K562 (cell line): ENCODE measurements at regions of chr1 and their contacts with region 1.

Region 1: DNA sequence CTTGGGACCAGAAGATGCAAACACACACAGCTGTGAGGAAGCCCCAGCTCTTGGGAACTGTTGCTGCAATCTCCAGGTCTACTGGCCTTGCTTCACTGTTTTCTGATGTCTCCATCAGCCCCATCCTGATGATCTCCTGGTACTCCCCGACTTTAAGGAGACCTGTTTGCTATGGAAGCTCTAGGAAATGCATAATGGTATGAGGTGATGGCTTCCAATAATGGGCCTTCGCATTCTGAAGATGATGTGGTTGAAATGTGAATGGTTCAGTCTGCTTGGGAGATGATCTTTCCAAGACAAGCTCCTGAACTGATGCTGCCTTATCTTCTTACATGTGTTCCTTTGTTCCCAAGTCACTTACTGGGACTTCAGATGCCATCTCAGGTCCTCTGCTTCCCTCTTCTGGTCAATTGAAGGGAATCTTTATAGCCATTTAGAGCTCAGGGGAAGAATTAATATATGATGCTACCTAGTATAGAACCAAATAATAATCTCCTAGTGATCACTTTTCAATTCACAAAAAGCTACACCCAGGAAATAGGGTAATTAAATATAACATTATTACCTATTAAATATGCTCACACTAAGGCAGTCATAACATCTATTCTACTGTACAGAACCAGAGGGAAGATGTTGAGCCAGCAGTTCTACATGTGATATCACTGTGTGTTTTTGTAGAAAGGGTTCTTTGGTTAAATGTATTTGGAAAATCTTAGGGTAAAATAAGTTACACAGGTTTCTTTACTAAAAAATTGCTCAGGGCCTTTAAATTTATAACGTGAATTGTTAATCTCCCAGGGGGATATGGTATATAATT is 73.9 kb upstream of the VTCN1 start:
- DNase-seq: peak; percentile 53 to 70 (median 60)
- ATAC-seq: peak; percentile 90
- H3K4me3 ChIP-seq: no peak overlapping the region
- H3K27ac ChIP-seq: no peak overlapping the region
- H3K4me1 ChIP-seq: no peaks in the 10 kb centered on the region
- H3K27me3 ChIP-seq: no peaks in the 10 kb centered on the region; a peak in 1 of 5 replicates
- CTCF ChIP-seq: peak; percentile 65 to 88 (median 71); a peak in 5 of 6 replicates
- EP300 ChIP-seq: no peak
- POLR2A ChIP-seq: no peak
- RAD21 ChIP-seq: peak; percentile 91 to 95

Region 2: DNA sequence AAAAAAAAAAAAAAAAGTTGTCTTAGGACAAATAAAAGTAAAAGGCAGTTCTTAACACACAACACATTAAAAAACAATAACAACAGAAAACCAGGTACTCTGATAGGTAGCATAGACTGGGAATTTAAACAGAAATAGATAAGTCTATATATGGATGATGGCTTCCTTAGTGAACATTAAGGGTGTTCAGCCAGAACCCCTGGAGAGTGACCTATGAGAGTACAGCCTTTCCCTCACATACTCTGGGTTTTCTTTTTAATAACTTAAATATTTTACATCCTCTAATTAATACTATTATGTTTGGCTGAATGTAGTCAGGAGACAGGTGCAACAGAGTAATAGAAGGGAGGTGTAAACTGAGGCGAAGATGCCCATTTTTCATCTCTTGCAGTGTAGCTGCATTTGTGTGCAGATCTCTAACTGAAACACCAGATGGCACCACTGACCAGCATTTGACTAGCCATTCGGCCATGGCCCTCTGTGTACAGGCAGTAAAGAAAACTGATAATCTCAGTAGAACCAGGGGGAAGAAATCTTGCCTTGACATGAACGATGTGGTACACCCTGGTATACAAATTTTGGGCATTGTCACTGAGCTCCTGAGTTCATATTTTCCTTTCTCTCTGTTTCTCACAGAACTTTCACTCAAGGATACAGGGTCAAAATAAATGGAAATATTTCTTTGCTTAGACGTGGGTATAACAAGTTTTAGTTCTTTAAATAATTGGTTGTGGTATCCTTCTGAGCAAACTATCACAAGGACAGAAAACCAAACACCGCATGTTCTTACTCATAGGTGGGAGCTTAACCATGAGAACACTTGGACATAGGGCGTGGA is 216.9 kb before region 1 on chr1:
- CTCF ChIA-PET with region 1: interaction called, 30 read pairs
- POLR2A ChIA-PET with region 1: interaction called, 9 read pairs
- in situ Hi-C with region 1: no loop called
- intact Hi-C with region 1: loop called (anchors 1 kb)
- DNase-seq: peak; percentile 47 to 76 (median 61)
- ATAC-seq: peak; percentile 96
- H3K4me3 ChIP-seq: no peak overlapping the region
- H3K27ac ChIP-seq: no peak overlapping the region
- H3K4me1 ChIP-seq: no peaks in the 10 kb centered on the region; a peak in 1 of 5 replicates
- H3K27me3 ChIP-seq: no peaks in the 10 kb centered on the region
- CTCF ChIP-seq: peak; percentile 79 to 90 (median 88)
- EP300 ChIP-seq: no peak
- POLR2A ChIP-seq: no peak
- RAD21 ChIP-seq: peak; percentile 95

Region 3: DNA sequence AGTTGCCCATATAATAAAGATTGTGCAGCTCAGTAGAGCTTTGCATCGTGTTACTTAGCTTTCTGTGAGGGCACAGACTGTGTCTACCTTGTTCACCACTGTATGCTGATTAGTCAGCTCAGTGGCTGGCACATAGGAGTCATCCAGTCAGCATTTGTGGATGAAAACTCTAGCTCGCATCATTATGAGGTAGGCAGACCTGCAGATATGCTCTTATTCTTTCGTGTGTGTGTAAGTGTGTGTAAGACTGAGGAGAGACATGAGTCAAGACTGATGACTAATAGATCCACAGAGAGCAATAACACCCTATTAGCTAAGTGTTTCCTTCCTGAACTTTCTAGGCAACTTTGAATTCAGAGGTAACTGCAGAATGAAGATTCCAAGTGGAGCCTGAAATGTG is 207.3 kb before region 1 on chr1:
- CTCF ChIA-PET with region 1: no interaction called
- POLR2A ChIA-PET with region 1: no interaction called
- in situ Hi-C with region 1: loop called (anchors 5 kb)
- intact Hi-C with region 1: no loop called
- DNase-seq: no peak
- ATAC-seq: no peak
- H3K4me3 ChIP-seq: no peak overlapping the region
- H3K27ac ChIP-seq: no peak overlapping the region
- H3K4me1 ChIP-seq: no peaks in the 10 kb centered on the region
- H3K27me3 ChIP-seq: no peaks in the 10 kb centered on the region
- CTCF ChIP-seq: no peak
- EP300 ChIP-seq: no peak
- POLR2A ChIP-seq: no peak
- RAD21 ChIP-seq: no peak

Region 4: GRCh38 chr1:117121776-117122697 is 162.6 kb before region 1 on chr1:
- CTCF ChIA-PET with region 1: no interaction called
- POLR2A ChIA-PET with region 1: no interaction called
- in situ Hi-C with region 1: no loop called
- intact Hi-C with region 1: loop called (anchors 5 kb)
- DNase-seq: peak; percentile 96 to 97 (median 96)
- ATAC-seq: peak; percentile 98
- H3K4me3 ChIP-seq: peak overlapping the region; percentile 51
- H3K27ac ChIP-seq: peak overlapping the region; percentile 82
- H3K4me1 ChIP-seq: peaks cover 6 to 17% of the 10 kb centered on the region in 2 experiments; a peak in 4 of 5 replicates
- H3K27me3 ChIP-seq: peaks cover 6% of the 10 kb centered on the region in 2 experiments; a peak in 1 of 5 replicates
- CTCF ChIP-seq: peak; percentile 77 to 88 (median 81)
- EP300 ChIP-seq: no peak
- POLR2A ChIP-seq: peak; percentile 79
- RAD21 ChIP-seq: peak; percentile 62 to 70

Region 5: DNA sequence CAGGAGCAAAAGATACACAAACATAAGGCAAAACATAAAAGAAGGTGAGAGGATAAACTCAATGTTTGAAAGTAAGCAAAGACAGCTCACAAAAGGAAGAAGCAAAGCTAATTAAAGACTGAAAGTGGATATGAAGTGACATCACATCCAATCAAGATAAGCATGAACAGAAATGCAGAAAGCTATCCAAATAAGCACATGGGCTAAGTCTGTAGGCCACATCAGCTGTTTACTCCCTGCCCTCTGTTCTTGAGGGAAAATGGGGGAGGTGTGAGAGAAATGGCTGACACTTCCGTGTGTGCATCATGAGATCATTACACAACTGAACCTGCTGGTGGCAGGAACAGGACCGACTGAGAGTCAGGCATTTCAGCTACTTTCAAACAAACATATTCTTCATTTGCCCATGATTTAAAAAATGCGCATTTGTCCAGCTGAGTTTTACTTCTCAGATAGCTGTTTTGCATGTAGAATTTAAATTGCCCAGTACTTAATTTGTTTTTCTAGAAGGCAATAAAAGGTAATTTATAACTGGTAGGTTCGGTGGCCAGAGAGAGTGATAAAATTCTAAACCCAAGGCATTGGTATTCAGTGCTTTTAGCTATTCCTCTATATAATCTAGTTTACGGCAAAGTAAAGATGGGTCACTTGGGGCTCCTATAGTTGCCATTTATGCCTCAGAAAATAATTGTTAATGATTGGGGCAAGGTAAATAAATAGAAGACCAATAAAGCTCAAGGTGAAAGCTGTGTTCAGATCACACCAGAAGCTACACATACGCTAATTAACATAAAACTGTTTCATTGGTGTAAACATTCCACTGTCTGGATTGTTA is 55.5 kb after region 1 on chr1:
- CTCF ChIA-PET with region 1: no interaction called
- POLR2A ChIA-PET with region 1: no interaction called
- in situ Hi-C with region 1: no loop called
- intact Hi-C with region 1: no loop called
- DNase-seq: peak; percentile 66 to 75 (median 73)
- ATAC-seq: peak; percentile 96
- H3K4me3 ChIP-seq: no peak overlapping the region
- H3K27ac ChIP-seq: peak overlapping the region; percentile 44; the same call in 1 of the 3 replicates
- H3K4me1 ChIP-seq: peaks cover 0 to 7% of the 10 kb centered on the region in 2 experiments; a peak in 3 of 5 replicates
- H3K27me3 ChIP-seq: peaks cover 2 to 9% of the 10 kb centered on the region in 2 experiments; a peak in 4 of 5 replicates
- CTCF ChIP-seq: peak; percentile 21 to 47 (median 30); a peak in 4 of 6 replicates
- EP300 ChIP-seq: peak; percentile 62
- POLR2A ChIP-seq: no peak
- RAD21 ChIP-seq: peak; percentile 35 to 47; a peak in 3 of 4 replicates